Aorta (tissue), 5 donors: ENCODE measurements at regions of chr1 and their contacts with region 1.

Region 1: DNA sequence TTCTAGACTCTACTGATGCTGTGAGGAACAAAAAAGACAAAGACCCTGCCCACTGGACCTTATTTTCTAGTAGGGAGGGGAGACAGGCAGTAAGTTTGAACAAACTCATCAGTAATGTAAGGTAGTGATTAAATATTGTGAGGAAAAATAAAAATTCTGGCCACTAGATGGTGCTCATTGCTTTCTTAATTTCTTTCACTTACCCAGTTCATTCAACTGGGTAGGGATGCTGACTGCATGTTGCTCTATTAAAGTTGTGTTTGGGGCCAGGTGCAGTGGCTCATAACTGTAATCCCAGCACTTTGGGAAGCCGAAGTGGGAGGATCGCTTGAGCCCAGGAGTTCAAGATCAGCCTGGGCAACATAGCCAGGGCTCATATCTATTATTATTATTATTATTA is 6.3 kb upstream of the KYAT3 start:
- DNase-seq: no peak
- ATAC-seq: peak; percentile 89
- H3K4me3 ChIP-seq: no peak overlapping the region
- H3K27ac ChIP-seq: no peak overlapping the region
- H3K4me1 ChIP-seq: no peaks in the 10 kb centered on the region
- H3K27me3 ChIP-seq: no peaks in the 10 kb centered on the region

Region 2: DNA sequence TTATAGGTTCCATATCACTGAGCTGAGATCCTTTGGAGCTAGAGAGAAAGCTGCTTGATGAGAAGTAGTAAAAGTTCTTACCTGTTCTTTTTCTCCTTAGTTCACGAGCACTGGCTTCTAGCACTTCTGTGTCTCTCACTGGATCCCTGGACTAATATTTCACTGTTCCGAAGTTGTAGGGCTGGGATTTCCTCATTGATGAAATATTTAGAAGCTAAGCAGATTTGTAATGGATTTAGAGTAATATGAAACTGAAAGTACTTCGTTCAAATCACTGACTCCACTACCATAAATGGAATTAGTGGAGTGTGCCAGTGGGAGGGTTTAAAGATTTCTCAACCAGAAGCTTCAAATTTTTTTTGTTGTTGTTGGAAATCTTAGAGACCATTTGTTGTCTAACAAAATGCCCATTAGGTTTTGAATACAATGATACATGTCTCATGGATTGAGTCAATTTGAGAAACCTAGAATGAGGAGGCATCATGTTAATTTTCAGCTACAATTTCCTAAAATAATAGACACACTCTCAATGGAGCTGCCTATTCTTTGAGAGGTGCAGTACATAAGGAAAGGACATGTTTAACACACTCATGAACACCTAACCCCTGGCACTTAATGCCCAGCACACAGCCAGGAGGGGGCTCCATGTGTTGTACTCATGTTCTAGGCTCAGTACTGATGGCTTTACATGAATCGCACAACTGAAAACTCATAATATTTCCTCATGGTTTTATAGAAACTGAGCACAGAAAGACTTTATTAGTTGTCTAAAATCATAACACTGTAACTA is 66.6 kb after region 1 on chr1 and contains the start of gene GBP1:
- intact Hi-C with region 1: loop called in 1 of 2 experiments (anchors 5 kb)
- DNase-seq: no peak
- ATAC-seq: peak; percentile 92
- H3K4me3 ChIP-seq: peak within 1 kb of the TSS; percentile 94 to 98
- H3K27ac ChIP-seq: peak within 1 kb of the TSS; percentile 15 to 98
- H3K4me1 ChIP-seq: no peaks in the 10 kb centered on the region
- H3K27me3 ChIP-seq: no peaks in the 10 kb centered on the region
- total RNA-seq, gene GBP1: 43.8 to 62.6 TPM

Region 3: DNA sequence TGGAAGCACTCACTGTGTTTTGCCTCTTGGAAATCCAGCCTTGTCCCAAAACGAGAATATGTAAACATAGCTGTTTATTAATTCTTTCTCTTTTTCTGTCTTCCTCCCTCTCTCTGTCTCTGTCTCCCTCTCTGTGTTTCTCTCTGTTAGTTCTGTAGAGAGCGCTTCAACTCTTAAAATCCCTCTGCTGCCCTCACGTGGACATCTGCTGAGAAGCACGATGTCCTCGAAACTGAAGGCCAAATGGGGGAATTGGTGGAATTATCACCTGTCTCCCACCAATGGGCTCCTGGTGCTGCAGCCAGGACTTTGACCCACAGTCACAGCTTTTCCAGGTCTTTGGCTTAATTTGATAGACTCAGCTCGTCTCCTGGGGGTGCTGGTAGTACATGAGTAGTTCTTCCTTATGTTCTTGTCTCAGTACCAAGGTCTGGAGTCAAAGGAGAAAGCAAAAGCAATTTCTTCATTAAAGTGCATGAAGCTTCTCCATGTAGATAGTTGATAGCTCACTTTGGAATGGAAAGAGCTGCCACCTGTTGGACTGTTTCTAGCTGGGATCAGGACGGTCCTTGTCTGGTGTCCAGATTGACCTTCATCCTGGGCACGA is 359.7 kb after region 1 on chr1:
- intact Hi-C with region 1: loop called (anchors 2 to 5 kb)
- DNase-seq: peak; percentile 82 to 89
- ATAC-seq: peak; percentile 90
- H3K4me3 ChIP-seq: no peak overlapping the region
- H3K27ac ChIP-seq: no peak overlapping the region
- H3K4me1 ChIP-seq: no peaks in the 10 kb centered on the region
- H3K27me3 ChIP-seq: no peaks in the 10 kb centered on the region

Region 4: GRCh38 chr1:89454845-89455521 is 456.3 kb after region 1 on chr1:
- intact Hi-C with region 1: loop called in 1 of 2 experiments (anchors 5 kb)
- DNase-seq: no peak
- ATAC-seq: no peak
- H3K4me3 ChIP-seq: no peak overlapping the region
- H3K27ac ChIP-seq: no peak overlapping the region
- H3K4me1 ChIP-seq: no peaks in the 10 kb centered on the region
- H3K27me3 ChIP-seq: no peaks in the 10 kb centered on the region